Activated CD8-positive, alpha-beta T cell treated with anti-CD3 and anti-CD28 coated beads for 36 hours (primary cell): ENCODE measurements at regions of chr2 and their contacts with region 1.

Region 1: DNA sequence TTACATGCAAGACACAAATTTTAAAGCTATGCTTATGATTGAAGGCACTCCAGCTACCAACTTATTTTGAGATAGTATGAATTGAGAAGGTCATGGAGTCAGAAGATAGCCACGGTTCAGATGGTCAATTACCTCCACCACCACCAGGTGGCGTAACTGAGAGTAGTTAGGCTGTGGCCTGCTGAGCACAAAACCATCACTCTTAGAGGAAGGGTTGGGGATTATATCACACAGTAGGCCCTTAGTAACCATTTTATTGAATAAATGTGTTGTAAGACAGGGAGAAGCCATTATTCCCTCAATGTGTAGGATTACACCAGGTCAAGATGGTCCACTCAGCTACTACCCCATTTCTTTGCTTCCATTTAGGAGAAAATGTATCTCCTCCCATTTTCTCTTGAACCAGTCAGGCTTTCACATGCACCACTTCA is 18.8 kb downstream of the KLHL41 start:
- DNase-seq: peak; percentile 88
- ATAC-seq: peak; percentile 97
- H3K4me3 Mint-ChIP-seq: no peak overlapping the region
- H3K27ac Mint-ChIP-seq: no peak overlapping the region
- H3K4me1 Mint-ChIP-seq: no peaks in the 10 kb centered on the region
- H3K27me3 Mint-ChIP-seq: no peaks in the 10 kb centered on the region
- CTCF ChIP-seq: peak; percentile 83

Region 2: GRCh38 chr2:169590804-169591203 is 62.5 kb after region 1 on chr2:
- CTCF ChIA-PET with region 1: no interaction called
- POLR2A ChIA-PET with region 1: no interaction called
- intact Hi-C with region 1: no loop called
- DNase-seq: no peak
- ATAC-seq: no peak
- H3K4me3 Mint-ChIP-seq: no peak overlapping the region
- H3K27ac Mint-ChIP-seq: no peak overlapping the region
- H3K4me1 Mint-ChIP-seq: peaks cover 37% of the 10 kb centered on the region
- H3K27me3 Mint-ChIP-seq: no peaks in the 10 kb centered on the region
- CTCF ChIP-seq: no peak

Region 3: GRCh38 chr2:169928463-169928864 is 400.2 kb after region 1 on chr2:
- CTCF ChIA-PET with region 1: interaction called, 4 read pairs
- POLR2A ChIA-PET with region 1: no interaction called
- intact Hi-C with region 1: loop called (anchors 5 kb)
- DNase-seq: no peak
- ATAC-seq: peak; percentile 60
- H3K4me3 Mint-ChIP-seq: no peak overlapping the region
- H3K27ac Mint-ChIP-seq: no peak overlapping the region
- H3K4me1 Mint-ChIP-seq: no peaks in the 10 kb centered on the region
- H3K27me3 Mint-ChIP-seq: no peaks in the 10 kb centered on the region
- CTCF ChIP-seq: peak; percentile 91